ENCODE measurements at regions of chr18 and their contacts with region 1.

Region 1: DNA sequence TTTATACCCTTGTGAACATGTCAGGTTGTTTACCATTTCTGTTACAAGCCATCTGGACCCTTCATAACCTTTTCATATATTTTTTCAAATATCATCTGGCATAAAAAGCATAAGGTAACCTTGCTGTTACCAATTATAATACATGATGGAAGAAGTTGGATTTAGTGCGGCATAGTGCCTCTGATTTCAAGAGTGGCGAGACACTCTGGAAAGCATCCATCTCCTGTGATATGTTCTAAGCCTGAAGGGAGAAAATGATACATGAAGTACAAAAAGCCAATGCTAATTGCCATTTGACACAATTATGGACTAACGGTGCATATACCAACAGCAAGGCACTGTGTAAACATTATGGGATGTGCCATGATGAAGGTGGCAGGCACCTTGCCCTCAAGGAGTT is 75.1 kb downstream of the DCC start:
- DNase-seq: no peak
- H3K4me3 ChIP-seq: no peak overlapping the region
- H3K27ac ChIP-seq: no peak overlapping the region
- H3K27me3 ChIP-seq: no peaks in the 10 kb centered on the region
- CTCF ChIP-seq: no peak

Region 2: DNA sequence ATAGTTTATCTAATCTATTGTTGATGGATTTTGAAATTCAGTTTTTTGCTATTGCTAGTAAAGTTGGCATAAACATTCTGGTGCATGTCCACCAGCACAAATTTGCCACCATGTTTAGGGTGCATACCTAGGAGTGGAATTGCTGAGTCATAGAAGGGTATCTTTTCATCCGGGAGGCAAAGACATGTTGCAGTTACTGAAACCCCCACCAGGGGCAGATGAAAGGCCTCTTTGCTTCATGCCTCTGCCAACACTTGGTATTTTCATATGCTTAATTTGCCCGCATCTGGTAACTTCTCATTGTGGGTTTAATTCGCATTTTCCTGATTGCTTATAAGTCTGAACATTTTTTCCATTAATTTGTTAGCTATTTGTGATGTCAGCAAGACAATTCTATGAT is 66.9 kb before region 1 on chr18:
- intact Hi-C with region 1: loop called (anchors 5 to 10 kb)
- DNase-seq: no peak
- H3K4me3 ChIP-seq: no peak overlapping the region
- H3K27ac ChIP-seq: peak overlapping the region in 8 of 59 donors; percentile 3 to 79 (median 36)
- H3K27me3 ChIP-seq: no peaks in the 10 kb centered on the region
- CTCF ChIP-seq: peak in 32 of 56 donors; percentile 2 to 49 (median 26)